ENCODE measurements at regions of chr16 and their contacts with region 1.

Region 1: GRCh38 chr16:27600381-27600780 is 50.4 kb downstream of the KATNIP start:
- DNase-seq: no peak
- ATAC-seq: no peak
- H3K4me3 ChIP-seq: no peak overlapping the region
- H3K27ac ChIP-seq: no peak overlapping the region
- H3K4me1 ChIP-seq: no peaks in the 10 kb centered on the region
- H3K27me3 ChIP-seq: no peaks in the 10 kb centered on the region
- CTCF ChIP-seq: no peak

Region 2: DNA sequence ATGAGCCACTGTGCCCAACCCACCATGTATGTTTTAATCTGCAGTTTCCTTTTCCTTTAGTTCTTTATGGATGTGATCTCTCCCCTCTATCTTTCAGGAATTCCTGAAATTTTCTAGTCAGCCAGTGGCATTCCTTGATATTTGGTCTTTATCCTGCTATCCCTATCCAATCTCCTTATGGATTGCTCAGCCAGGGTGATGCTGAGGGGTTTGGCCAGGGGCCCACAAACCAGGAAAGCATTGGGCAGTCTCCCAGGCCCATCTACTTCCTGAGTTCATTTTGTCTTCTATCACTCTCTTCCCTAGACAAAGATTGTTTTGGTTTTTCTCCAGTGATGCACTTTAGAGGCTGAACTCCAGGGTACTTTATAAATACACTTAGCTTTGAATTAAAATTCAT is 65.5 kb after region 1 on chr16:
- intact Hi-C with region 1: loop called in 1 of 10 experiments (anchors 10 kb)
- DNase-seq: no peak
- ATAC-seq: no peak
- H3K4me3 ChIP-seq: no peak overlapping the region
- H3K27ac ChIP-seq: no peak overlapping the region
- H3K4me1 ChIP-seq: no peaks in the 10 kb centered on the region
- H3K27me3 ChIP-seq: no peaks in the 10 kb centered on the region
- CTCF ChIP-seq: no peak

Region 3: DNA sequence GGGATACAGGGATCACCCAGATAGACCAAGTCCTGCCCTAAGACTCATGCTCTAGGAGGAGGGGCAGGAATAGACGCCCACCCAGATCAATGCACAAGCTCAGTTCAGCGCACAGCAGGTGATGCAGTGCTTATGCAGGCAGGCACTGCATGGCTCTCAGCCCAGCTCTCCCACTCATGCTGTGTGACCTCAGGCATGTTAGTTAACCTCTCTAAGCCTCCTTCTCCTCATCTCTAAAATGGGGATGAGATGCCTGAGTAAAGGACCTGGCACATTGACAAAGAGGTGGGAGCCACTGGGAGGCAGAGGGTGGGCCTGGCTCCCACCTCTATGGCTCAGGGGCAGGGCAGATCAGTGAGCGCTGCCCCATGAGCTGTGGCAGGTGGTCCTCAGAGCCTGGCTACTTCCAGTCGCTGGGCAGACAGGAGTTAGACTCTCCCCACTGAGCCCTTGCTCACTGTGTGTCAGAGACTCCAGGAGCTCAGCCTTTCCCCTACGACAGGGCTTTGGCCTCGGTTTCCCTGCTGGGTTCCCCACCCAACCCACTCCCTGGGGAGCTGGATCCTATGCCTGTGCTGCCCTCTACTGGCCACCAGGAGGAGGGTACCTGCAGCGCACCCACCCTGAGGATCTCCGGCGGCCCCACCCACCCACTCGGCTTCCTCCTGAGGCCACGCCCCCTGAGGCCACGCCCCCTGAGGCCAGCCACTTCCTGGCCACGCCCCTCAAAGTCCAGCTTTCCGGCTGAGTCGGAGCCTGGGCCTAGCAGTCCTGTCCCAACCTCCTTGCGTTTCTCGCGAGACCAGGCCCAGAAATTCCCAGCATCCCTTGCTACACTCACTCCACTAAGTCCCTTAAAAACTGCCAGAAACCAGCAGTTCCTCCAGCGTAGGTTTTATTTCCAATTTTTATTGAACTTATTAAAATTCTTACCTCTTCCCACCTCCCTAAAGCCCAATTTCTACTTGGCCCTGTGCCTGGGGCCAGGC is 267.0 kb after region 1 on chr16:
- intact Hi-C with region 1: loop called in 1 of 10 experiments (anchors 10 kb)
- DNase-seq: peak; percentile 28 to 51
- ATAC-seq: peak; percentile 49 to 86 (median 69)
- H3K4me3 ChIP-seq: no peak overlapping the region
- H3K27ac ChIP-seq: no peak overlapping the region
- H3K4me1 ChIP-seq: no peaks in the 10 kb centered on the region
- H3K27me3 ChIP-seq: peaks cover 0 to 11% (median 0%) of the 10 kb centered on the region in 7 donors
- CTCF ChIP-seq: peak in 7 of 9 donors; percentile 44 to 54 (median 51)

Region 4: GRCh38 chr16:27911486-27911885 is 311.1 kb after region 1 on chr16:
- intact Hi-C with region 1: no loop called
- DNase-seq: no peak
- ATAC-seq: no peak
- H3K4me3 ChIP-seq: no peak overlapping the region
- H3K27ac ChIP-seq: no peak overlapping the region
- H3K4me1 ChIP-seq: no peaks in the 10 kb centered on the region
- H3K27me3 ChIP-seq: peaks cover 0 to 18% (median 0%) of the 10 kb centered on the region in 7 donors
- CTCF ChIP-seq: no peak